CD4-positive, alpha-beta memory T cell (primary cell): ENCODE measurements at regions of chr11 and their contacts with region 1.

Region 1: DNA sequence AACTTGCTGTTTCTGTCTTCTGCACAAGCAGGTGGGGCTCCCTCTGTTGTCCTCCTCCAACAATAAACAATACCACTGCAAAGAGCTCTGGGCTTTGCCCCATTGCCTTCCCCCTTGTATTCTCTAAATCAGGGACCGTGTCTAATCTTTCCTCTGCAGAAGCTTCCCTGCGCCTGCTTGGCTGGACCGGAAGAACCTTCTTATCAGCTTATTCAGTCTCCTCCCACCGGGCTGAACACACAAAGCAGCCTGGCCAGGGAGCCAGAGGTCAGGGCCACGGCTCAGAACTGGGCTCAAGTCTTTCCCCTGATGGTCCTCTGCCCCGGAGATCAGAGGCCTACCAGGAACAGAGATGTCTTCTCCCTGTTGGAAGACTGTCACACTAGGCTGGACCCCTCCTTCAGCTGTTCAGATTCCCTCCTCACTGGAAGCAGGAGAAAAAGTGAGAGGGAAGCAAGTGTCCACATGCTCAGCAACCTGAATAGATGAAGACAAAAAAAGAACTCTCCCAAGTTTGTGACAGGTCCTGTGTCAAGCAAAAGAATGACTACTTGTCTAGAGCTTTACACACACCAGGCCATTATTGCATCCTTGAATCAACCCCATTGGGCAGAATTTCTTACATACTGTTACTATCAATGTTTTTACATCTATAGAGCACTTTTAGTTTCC is 63.7 kb downstream of the RAB30 start:
- DNase-seq: no peak
- H3K4me3 ChIP-seq: no peak overlapping the region
- H3K4me3 Mint-ChIP-seq: peak overlapping the region in 2 of 8 donors; percentile 41 to 66
- H3K27ac ChIP-seq: no peak overlapping the region
- H3K27ac Mint-ChIP-seq: peak overlapping the region in 1 of 7 donors; percentile 36
- H3K4me1 ChIP-seq: peaks cover 6% of the 10 kb centered on the region
- H3K4me1 Mint-ChIP-seq: peaks cover 12 to 32% (median 21%) of the 10 kb centered on the region in 4 donors
- H3K27me3 ChIP-seq: no peaks in the 10 kb centered on the region
- H3K27me3 Mint-ChIP-seq: no peaks in the 10 kb centered on the region

Region 2: GRCh38 chr11:83063073-83063754 is 55.2 kb after region 1 on chr11:
- CTCF ChIA-PET with region 1: no interaction called
- POLR2A ChIA-PET with region 1: no interaction called
- intact Hi-C with region 1: loop called (anchors 5 kb)
- DNase-seq: peak in 4 of 5 donors; percentile 27 to 40 (median 30)
- H3K4me3 ChIP-seq: peak overlapping the region; percentile 0 to 46
- H3K4me3 Mint-ChIP-seq: peak overlapping the region; percentile 83 to 91 (median 86)
- H3K27ac ChIP-seq: peak overlapping the region; percentile 11
- H3K27ac Mint-ChIP-seq: peak overlapping the region; percentile 43 to 96 (median 92)
- H3K4me1 ChIP-seq: peaks cover 22% of the 10 kb centered on the region
- H3K4me1 Mint-ChIP-seq: peaks cover 16 to 29% (median 21%) of the 10 kb centered on the region in 4 donors
- H3K27me3 ChIP-seq: no peaks in the 10 kb centered on the region
- H3K27me3 Mint-ChIP-seq: no peaks in the 10 kb centered on the region